ENCODE measurements at regions of chr13 and their contacts with region 1.

Region 1: DNA sequence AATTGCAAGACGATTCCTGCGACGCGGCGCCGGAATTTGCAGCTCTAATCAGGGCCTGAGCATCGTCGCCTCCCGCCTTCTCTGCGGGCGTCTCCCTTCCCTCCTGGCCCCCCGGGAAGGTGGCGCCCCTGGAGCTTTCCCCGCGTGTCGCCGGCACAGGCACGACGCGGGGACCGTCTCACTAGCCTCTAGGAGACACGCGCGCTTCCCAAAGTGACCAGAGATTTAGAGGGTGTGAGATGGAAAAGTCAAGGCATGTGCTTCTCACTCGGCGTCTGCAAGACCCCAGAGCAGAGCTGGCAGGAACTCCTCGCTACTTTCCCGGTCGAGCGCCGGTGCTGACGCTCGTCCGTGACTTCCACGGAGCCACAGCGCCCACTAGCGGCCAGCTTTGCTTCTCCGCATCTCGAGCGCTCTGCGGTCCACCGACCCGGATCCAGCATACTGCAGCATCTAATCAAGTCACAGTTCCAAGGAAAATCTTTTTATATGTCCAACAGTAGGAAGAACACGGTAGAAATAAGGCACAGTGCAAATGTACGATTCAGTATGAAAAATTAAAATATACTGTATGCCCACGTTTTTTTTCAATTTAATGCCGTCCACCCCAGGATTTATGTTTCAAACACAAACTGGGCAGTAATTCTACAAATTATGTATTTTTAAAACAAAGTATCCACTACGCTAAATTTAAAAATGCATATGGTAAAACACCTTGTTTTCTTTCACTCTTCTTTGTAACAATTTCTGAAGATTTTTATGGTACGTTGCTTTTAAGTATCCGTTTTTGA is 977 bp upstream of the EFNB2 start:
- DNase-seq: peak; percentile 74
- H3K4me3 Mint-ChIP-seq: peak overlapping the region; percentile 93
- H3K27ac Mint-ChIP-seq: peak overlapping the region; percentile 84
- H3K4me1 Mint-ChIP-seq: peaks cover 18% of the 10 kb centered on the region
- H3K27me3 Mint-ChIP-seq: peaks cover 32% of the 10 kb centered on the region

Region 2: GRCh38 chr13:105139380-105140285 is 1396.8 kb before region 1 on chr13:
- intact Hi-C with region 1: loop called (anchors 10 kb)
- DNase-seq: peak; percentile 59
- H3K4me3 Mint-ChIP-seq: peak overlapping the region; percentile 88
- H3K27ac Mint-ChIP-seq: peak overlapping the region; percentile 96
- H3K4me1 Mint-ChIP-seq: peaks cover 20% of the 10 kb centered on the region
- H3K27me3 Mint-ChIP-seq: peaks cover 4% of the 10 kb centered on the region

Region 3: DNA sequence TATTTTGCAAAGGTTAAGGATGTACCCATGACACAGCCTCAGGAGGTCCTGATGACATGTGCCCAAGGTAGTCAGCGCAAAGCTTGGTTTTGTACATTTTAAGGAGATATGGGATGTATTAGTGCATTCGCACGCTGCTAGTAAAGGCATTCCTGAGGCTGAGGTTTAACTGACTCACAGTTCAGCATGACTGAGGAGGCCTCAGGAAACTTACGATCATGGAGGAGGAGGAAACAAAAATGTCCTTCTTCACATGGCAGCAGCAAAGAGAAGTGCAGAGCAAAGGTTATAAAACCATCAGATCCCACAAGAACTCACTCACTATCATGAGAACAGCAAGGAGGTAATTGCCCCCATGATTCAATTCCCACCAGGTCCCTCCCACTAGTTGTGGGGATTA is 1018.4 kb before region 1 on chr13:
- intact Hi-C with region 1: loop called (anchors 10 kb)
- DNase-seq: no peak
- H3K4me3 Mint-ChIP-seq: no peak overlapping the region
- H3K27ac Mint-ChIP-seq: no peak overlapping the region
- H3K4me1 Mint-ChIP-seq: no peaks in the 10 kb centered on the region
- H3K27me3 Mint-ChIP-seq: no peaks in the 10 kb centered on the region

Region 4: GRCh38 chr13:106349080-106349931 is 187.1 kb before region 1 on chr13:
- intact Hi-C with region 1: loop called (anchors 5 kb)
- DNase-seq: no peak
- H3K4me3 Mint-ChIP-seq: no peak overlapping the region
- H3K27ac Mint-ChIP-seq: no peak overlapping the region
- H3K4me1 Mint-ChIP-seq: no peaks in the 10 kb centered on the region
- H3K27me3 Mint-ChIP-seq: peaks cover 16% of the 10 kb centered on the region

Region 5: GRCh38 chr13:106499896-106500295 is 36.5 kb before region 1 on chr13:
- intact Hi-C with region 1: loop called (anchors 2 kb)
- DNase-seq: no peak
- H3K4me3 Mint-ChIP-seq: no peak overlapping the region
- H3K27ac Mint-ChIP-seq: no peak overlapping the region
- H3K4me1 Mint-ChIP-seq: no peaks in the 10 kb centered on the region
- H3K27me3 Mint-ChIP-seq: peaks cover 35% of the 10 kb centered on the region

Region 6: DNA sequence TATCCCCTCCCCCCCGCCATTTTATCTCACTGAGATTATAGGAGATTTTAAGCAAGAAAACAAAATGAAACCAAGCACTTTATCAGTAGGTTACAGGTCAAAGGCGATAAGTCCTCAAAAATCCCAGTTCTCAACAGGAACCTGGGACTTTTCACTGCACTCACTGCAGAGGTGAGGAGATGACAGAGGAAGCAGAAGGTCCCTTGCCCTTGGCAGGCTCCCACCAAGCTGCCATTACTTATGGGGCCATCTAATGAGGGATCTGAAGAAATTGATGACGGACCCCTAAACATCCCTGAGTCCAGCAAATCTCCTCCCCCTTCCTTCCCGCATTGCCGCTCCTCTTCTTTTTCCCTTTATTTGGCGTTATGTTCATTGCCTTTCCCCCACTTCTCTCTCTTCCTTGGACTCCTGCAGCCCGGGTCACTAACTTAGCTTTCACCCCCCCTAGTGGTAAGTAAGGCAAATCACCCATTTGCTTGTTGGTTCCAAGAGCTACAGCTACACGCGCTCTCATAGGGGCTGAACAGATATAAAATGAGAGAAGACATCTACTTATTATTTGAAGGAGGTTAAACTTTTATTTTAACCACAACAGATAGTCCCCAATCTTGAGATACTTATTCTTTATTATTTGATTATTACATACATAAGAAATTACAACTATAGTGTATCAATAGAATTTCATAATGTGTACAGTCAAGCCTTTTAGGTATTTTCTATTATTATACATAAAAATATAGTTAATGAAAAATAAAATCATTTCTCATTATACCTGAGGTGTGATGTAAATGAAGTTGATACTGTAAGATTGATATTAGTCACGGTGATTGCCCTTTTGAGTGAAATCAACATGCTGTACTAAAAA is 83.5 kb after region 1 on chr13:
- intact Hi-C with region 1: loop called (anchors 1 kb)
- DNase-seq: no peak
- H3K4me3 Mint-ChIP-seq: no peak overlapping the region
- H3K27ac Mint-ChIP-seq: no peak overlapping the region
- H3K4me1 Mint-ChIP-seq: peaks cover 10% of the 10 kb centered on the region
- H3K27me3 Mint-ChIP-seq: peaks cover 8% of the 10 kb centered on the region